ENCODE measurements at regions of chr4 and their contacts with region 1.

Region 1: GRCh38 chr4:26330186-26330787 is 9.5 kb downstream of the RBPJ start:
- DNase-seq: peak; percentile 56 to 70 (median 68)
- H3K4me3 ChIP-seq: no peak overlapping the region
- H3K27ac ChIP-seq: no peak overlapping the region
- H3K4me1 ChIP-seq: peaks cover 0 to 7% (median under 1%) of the 10 kb centered on the region in 4 experiments
- H3K27me3 ChIP-seq: no peaks in the 10 kb centered on the region

Region 2: DNA sequence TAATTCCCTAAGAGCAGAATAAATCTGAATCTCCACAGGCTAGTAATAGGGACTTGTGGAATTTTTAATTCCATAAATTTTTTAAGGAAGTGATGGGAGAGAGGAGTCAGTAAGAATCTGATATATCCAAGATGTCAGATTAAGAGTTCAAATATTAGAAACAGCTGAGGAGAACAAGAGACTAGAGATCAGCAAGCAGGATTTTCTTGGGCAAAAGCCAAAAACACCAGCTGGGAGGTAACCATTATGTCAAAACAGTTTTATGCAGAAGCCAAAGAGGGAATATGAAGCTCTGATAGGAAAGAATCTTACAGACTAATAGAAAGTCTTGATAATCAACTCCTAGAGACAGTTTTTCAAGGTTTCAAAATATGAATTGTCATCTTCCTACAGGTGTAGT is 81.6 kb before region 1 on chr4:
- CTCF ChIA-PET with region 1: no interaction called
- POLR2A ChIA-PET with region 1: no interaction called
- DNase-seq: no peak
- H3K4me3 ChIP-seq: no peak overlapping the region
- H3K27ac ChIP-seq: no peak overlapping the region
- H3K4me1 ChIP-seq: no peaks in the 10 kb centered on the region
- H3K27me3 ChIP-seq: no peaks in the 10 kb centered on the region

Region 3: GRCh38 chr4:26342328-26343037 is 12.2 kb after region 1 on chr4:
- CTCF ChIA-PET with region 1: interaction called, 48 read pairs
- POLR2A ChIA-PET with region 1: no interaction called
- DNase-seq: peak in 1 of 3 donors; percentile 38
- H3K4me3 ChIP-seq: no peak overlapping the region
- H3K27ac ChIP-seq: no peak overlapping the region
- H3K4me1 ChIP-seq: peaks cover 0 to 5% (median under 1%) of the 10 kb centered on the region in 4 experiments
- H3K27me3 ChIP-seq: no peaks in the 10 kb centered on the region

Region 4: DNA sequence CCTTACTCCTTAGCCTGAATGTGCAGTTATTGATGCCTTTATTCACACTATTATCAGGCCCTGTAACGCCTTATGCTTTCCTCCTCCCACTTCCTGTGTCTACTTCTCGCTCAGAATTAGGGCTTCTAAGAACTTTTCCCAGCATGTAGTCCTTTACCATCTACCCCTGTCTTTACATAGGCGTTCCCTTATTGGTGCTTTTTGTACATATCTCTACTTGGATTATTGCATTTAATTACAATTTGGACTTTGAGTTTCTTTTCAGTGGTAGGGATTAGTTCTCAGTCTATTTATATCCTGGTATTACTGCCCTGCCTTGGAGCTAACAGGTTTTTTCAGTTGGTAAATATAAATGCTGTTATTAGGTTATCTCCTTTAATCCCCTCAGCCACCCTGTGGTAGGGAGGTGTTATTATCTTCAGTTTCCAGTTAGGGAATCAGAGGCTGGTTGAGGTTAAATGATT is 74.5 kb after region 1 on chr4:
- CTCF ChIA-PET with region 1: interaction called, 78 read pairs
- POLR2A ChIA-PET with region 1: no interaction called
- DNase-seq: no peak
- H3K4me3 ChIP-seq: no peak overlapping the region
- H3K27ac ChIP-seq: no peak overlapping the region
- H3K4me1 ChIP-seq: no peaks in the 10 kb centered on the region
- H3K27me3 ChIP-seq: no peaks in the 10 kb centered on the region